ENCODE measurements at regions of chr4 and their contacts with region 1.

Region 1: GRCh38 chr4:109433205-109434006 is at the start of gene SEC24B:
- DNase-seq: peak; percentile 82 to 83
- H3K4me3 ChIP-seq: peak within 1 kb of the TSS; percentile 62 to 86
- H3K27ac ChIP-seq: peak within 1 kb of the TSS; percentile 90 to 97
- H3K4me1 ChIP-seq: peaks cover 0 to 20% of the 10 kb centered on the region in 2 donors
- H3K27me3 ChIP-seq: no peaks in the 10 kb centered on the region
- CTCF ChIP-seq: peak; percentile 67 to 95 (median 90)
- POLR2A ChIP-seq: peak; percentile 73 to 84
- total RNA-seq, gene SEC24B: 20.7 to 54.1 (median 30.1) TPM

Region 2: GRCh38 chr4:109184491-109184961 is 248.9 kb before region 1 on chr4:
- intact Hi-C with region 1: no loop called
- DNase-seq: peak in 1 of 2 donors; percentile 22
- H3K4me3 ChIP-seq: no peak overlapping the region
- H3K27ac ChIP-seq: peak overlapping the region in 1 of 2 donors; percentile 30
- H3K4me1 ChIP-seq: no peaks in the 10 kb centered on the region
- H3K27me3 ChIP-seq: no peaks in the 10 kb centered on the region
- CTCF ChIP-seq: no peak
- POLR2A ChIP-seq: no peak

Region 3: GRCh38 chr4:109302361-109303139 is 130.9 kb before region 1 on chr4 and contains the start of gene COL25A1:
- intact Hi-C with region 1: no loop called
- DNase-seq: peak; percentile 43 to 48
- H3K4me3 ChIP-seq: peak within 1 kb of the TSS; percentile 47 to 49
- H3K27ac ChIP-seq: peak within 1 kb of the TSS; percentile 36 to 51
- H3K4me1 ChIP-seq: peaks cover 4 to 8% of the 10 kb centered on the region in 2 donors
- H3K27me3 ChIP-seq: peaks cover 0 to 12% of the 10 kb centered on the region in 2 donors
- CTCF ChIP-seq: no peak
- POLR2A ChIP-seq: no peak
- total RNA-seq, gene COL25A1: 0.26 to 41.1 (median 1.8) TPM in 3 of 4 donors, not detected in the other

Region 4: DNA sequence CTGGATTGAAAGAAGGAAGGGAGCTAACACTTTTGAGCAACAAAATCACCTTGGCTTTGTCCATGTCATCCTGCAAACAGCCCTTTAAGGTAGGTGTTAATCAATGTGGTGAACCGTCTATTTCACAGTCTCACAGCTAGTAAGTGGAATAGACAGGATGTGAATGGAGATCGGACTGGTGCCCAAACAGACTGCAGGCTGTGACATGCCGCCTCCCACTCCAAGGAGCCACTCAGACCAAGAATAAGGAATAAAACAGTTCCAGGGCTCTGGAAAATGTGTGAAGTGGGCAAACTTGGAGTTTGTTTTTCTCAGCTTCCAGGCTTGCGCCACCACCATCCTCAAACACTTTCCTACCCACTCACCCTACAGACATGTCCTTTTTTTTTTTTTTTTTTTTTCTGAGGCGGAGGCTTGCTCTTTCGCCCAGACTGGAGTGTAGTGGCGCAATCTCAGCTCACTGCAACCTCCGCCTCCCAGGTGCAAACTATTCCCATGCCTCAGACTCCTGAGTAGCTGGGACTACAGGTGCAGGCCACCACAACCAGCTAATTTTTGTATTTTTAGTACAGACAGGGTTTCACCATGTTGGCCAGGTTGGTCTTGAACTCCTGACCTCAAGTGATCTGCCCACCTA is 57.5 kb before region 1 on chr4:
- intact Hi-C with region 1: no loop called
- DNase-seq: no peak
- H3K4me3 ChIP-seq: no peak overlapping the region
- H3K27ac ChIP-seq: no peak overlapping the region
- H3K4me1 ChIP-seq: no peaks in the 10 kb centered on the region
- H3K27me3 ChIP-seq: no peaks in the 10 kb centered on the region
- CTCF ChIP-seq: no peak
- POLR2A ChIP-seq: no peak

Region 5: DNA sequence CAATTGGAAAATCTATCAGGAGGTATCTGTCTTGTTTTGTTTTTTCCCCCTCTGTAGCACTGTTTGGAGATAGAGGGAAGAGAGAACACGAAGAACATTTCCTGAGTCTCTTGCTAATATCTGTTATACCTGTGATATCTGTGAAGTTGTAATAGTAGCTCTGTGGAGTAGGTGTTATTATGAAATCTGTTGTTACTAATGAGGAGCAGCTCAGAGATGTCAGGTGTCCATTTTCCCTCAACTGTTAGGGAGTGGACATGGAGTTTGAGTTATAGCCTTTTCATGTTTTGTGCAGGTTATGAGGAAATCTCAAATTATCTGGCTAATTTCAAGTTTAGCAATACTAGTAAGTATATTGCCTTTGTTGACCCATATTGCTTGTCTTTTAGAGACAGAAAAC is 52.6 kb after region 1 on chr4:
- intact Hi-C with region 1: no loop called
- DNase-seq: no peak
- H3K4me3 ChIP-seq: no peak overlapping the region
- H3K27ac ChIP-seq: no peak overlapping the region
- H3K4me1 ChIP-seq: no peaks in the 10 kb centered on the region
- H3K27me3 ChIP-seq: no peaks in the 10 kb centered on the region
- CTCF ChIP-seq: no peak
- POLR2A ChIP-seq: no peak

Region 6: DNA sequence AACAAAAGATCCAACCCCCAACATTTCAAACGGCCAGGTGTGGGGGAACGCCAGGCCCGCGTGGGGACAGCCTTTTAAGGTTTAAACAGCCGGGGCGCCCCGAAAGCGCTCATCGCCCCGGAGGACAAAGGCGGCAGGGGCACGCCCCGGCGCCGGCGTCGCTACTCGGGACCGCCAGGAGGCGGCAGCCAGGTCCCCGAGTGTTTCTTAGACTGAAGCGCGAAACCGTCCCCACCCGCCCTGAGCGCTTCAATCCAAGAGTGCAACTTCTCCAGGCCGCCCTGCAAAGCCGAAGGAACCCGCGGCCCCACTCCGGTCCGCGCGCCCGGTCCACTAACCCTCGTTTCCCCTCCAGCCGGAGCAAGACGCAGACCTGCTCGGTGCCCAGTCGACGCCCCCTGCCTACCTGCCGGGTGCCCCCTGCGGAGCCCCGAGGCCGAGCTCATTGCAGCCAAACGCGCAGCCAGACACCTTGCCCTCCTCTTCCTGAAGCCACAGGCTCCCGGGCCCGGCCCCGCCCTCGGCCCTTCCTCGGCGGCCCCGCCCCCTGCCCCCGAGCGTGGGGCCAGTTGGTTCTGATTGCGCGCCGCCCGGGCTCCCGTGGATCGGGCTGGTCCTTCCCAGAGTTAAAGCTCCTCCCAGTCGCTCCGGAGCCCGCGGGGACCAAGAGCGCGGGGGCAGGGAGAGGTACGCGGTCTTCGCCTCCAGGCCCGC is 269.7 kb after region 1 on chr4 and contains the start of gene CASP6:
- intact Hi-C with region 1: loop called (anchors 10 kb)
- DNase-seq: peak; percentile 83 to 85
- H3K4me3 ChIP-seq: peak within 1 kb of the TSS; percentile 68 to 81
- H3K27ac ChIP-seq: peak within 1 kb of the TSS; percentile 76 to 87
- H3K4me1 ChIP-seq: peaks cover 0 to 6% of the 10 kb centered on the region in 2 donors
- H3K27me3 ChIP-seq: no peaks in the 10 kb centered on the region
- CTCF ChIP-seq: peak; percentile 37 to 76 (median 53)
- POLR2A ChIP-seq: peak; percentile 32 to 48
- total RNA-seq, gene CASP6: 17.0 to 121 (median 43.7) TPM